ENCODE measurements at regions of chr1 and their contacts with region 1.

Region 1: GRCh38 chr1:182677397-182678098 is 6.8 kb downstream of the RGS8 start:
- DNase-seq: peak; percentile 91
- H3K4me3 ChIP-seq: peak overlapping the region; percentile 60
- H3K27ac ChIP-seq: peak overlapping the region; percentile 84
- H3K4me1 ChIP-seq: peaks cover 88% of the 10 kb centered on the region
- CTCF ChIP-seq: no peak

Region 2: DNA sequence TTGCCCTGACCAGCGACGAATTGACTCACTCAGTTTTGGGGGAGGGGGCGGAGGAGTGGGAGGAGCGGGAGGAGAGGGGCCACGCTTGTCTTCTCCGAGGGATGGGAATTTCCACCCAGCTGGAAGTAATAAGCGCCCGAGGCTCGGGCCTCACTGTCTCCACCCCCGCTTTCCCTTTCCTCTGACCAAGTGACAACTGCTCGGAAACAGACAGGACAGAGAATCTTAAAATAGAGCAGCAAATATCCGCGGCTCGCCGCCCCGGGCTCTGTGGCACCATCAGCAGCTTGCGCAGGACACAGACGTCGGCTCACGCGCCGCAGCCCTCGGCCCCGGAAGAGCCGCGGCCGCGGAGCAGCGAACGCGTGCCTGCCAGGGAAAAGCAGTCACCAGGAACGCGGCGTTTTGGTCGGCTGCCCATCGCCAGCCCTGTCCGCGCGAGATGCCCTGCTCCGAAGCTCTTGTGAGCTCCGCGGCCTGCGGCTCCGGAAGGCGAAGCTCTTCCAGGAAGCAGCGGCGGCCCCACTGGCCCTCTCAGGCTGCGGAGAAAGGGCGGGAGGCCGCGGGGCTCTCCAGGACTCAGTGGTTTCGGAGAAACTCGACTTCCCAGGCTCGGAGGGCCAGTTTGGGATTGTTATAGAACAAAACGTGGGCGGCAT is 62.6 kb before region 1 on chr1:
- CTCF ChIA-PET with region 1: interaction called, 9 read pairs
- POLR2A ChIA-PET with region 1: interaction called, 12 read pairs
- intact Hi-C with region 1: no loop called
- DNase-seq: peak; percentile 43
- H3K4me3 ChIP-seq: peak overlapping the region; percentile 61
- H3K27ac ChIP-seq: peak overlapping the region; percentile 71
- H3K4me1 ChIP-seq: peaks cover 94% of the 10 kb centered on the region
- CTCF ChIP-seq: no peak

Region 3: DNA sequence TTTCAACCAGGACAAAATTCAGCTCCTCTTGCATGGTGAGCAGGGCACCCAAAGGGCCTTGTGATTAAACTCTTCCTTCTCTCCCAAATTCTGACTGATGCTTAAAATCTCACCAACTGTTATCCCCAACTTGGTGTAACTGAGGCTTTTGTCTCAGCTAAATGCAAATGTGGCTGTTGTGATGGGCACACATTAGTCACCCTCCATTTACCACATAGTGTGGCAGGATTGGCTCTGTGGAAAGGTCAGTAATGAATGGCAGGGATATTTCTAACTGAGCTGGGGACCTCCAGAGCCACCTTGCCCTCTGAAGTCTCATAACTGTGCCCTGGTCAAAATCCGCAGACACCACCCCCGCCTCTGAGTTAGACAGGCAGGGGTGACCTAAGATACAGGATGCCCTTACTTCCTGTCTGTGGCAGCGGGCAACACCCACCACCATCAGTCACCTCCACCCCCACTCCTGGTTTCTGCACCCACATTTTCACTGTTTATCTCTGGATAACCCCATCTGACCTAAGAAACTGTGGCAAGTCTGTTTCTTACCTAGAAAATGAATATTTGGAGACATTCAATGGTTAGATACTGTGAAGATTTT is 48.0 kb before region 1 on chr1:
- CTCF ChIA-PET with region 1: no interaction called
- POLR2A ChIA-PET with region 1: interaction called, 14 read pairs
- intact Hi-C with region 1: loop called (anchors 2 kb)
- DNase-seq: peak; percentile 59
- H3K4me3 ChIP-seq: peak overlapping the region; percentile 37
- H3K27ac ChIP-seq: peak overlapping the region; percentile 52
- H3K4me1 ChIP-seq: peaks cover 99% of the 10 kb centered on the region
- CTCF ChIP-seq: no peak

Region 4: DNA sequence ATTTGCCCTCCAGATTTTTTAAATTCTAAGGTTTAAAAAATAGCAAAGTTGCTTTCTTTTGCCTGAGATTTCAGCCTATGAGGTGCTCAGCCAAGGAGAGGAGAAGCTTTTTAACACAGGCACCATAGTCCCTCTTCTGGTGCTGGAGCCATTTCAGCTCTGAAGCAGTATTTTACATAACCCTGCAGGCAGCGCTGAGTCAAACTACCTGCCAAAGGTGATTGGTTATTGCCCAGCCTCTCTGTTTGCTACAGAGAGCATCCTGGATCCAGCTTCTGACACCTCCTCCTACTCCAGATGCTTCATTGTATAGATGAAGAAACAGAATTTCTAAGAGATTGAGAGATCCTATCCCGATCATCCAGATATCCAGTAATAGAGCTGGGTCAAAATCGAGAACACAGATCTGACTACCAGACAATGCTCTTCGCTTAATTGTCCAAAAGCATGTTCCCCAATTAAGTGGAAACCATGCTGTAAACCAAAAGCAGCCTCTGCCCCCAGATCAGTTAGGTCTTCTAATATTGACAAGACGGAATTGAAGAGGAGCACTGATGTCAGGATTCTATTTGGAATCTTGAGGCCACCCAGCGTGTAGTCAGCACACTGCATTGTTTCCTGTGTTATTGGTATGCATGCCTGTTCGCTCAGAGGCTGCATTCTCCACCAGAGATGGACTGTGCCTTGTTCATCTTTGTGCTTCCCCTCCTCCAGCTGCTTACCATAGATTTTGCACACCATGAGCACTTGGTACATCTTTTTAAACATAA is 15.2 kb before region 1 on chr1:
- CTCF ChIA-PET with region 1: interaction called, 4 read pairs
- POLR2A ChIA-PET with region 1: interaction called, 54 read pairs
- intact Hi-C with region 1: no loop called
- DNase-seq: peak; percentile 24
- H3K4me3 ChIP-seq: no peak overlapping the region
- H3K27ac ChIP-seq: no peak overlapping the region
- H3K4me1 ChIP-seq: peaks cover 40% of the 10 kb centered on the region
- CTCF ChIP-seq: peak; percentile 47; the same call in 1 of the 2 replicates

Region 5: GRCh38 chr1:182789138-182790076 is 111.9 kb after region 1 on chr1 and contains the start of gene NPL:
- CTCF ChIA-PET with region 1: no interaction called
- POLR2A ChIA-PET with region 1: no interaction called
- intact Hi-C with region 1: no loop called
- DNase-seq: peak; percentile 86
- H3K4me3 ChIP-seq: peak within 1 kb of the TSS; percentile 67
- H3K27ac ChIP-seq: no peak within 1 kb of the TSS
- H3K4me1 ChIP-seq: peaks cover 17% of the 10 kb centered on the region
- CTCF ChIP-seq: no peak
- total RNA-seq, gene NPL: 2.2 and 4.1 TPM in 2 replicates

Measured in OCI-LY7 (cell line).